Psoas muscle (tissue), 8 donors: ENCODE measurements at regions of chr12 and their contacts with region 1.

Region 1: GRCh38 chr12:14514154-14514842 is 53.4 kb downstream of the PLBD1 start:
- DNase-seq: no peak
- ATAC-seq: peak; percentile 49 to 85 (median 70)
- H3K4me3 ChIP-seq: no peak overlapping the region
- H3K27ac ChIP-seq: no peak overlapping the region
- H3K4me1 ChIP-seq: no peaks in the 10 kb centered on the region
- H3K27me3 ChIP-seq: no peaks in the 10 kb centered on the region
- CTCF ChIP-seq: peak; percentile 42

Region 2: GRCh38 chr12:14618983-14619382 is 104.7 kb after region 1 on chr12:
- intact Hi-C with region 1: loop called in 1 of 2 experiments (anchors 5 kb)
- DNase-seq: no peak
- ATAC-seq: peak in 1 of 4 donors; percentile 60
- H3K4me3 ChIP-seq: no peak overlapping the region
- H3K27ac ChIP-seq: no peak overlapping the region
- H3K4me1 ChIP-seq: peaks cover 3% of the 10 kb centered on the region
- H3K27me3 ChIP-seq: no peaks in the 10 kb centered on the region
- CTCF ChIP-seq: peak; percentile 33

Region 3: GRCh38 chr12:14664510-14664909 is 150.2 kb after region 1 on chr12:
- intact Hi-C with region 1: loop called in 1 of 2 experiments (anchors 5 kb)
- DNase-seq: no peak
- ATAC-seq: peak in 3 of 4 donors; percentile 57 to 76 (median 58)
- H3K4me3 ChIP-seq: no peak overlapping the region
- H3K27ac ChIP-seq: no peak overlapping the region
- H3K4me1 ChIP-seq: no peaks in the 10 kb centered on the region
- H3K27me3 ChIP-seq: no peaks in the 10 kb centered on the region
- CTCF ChIP-seq: peak; percentile 71

Region 4: DNA sequence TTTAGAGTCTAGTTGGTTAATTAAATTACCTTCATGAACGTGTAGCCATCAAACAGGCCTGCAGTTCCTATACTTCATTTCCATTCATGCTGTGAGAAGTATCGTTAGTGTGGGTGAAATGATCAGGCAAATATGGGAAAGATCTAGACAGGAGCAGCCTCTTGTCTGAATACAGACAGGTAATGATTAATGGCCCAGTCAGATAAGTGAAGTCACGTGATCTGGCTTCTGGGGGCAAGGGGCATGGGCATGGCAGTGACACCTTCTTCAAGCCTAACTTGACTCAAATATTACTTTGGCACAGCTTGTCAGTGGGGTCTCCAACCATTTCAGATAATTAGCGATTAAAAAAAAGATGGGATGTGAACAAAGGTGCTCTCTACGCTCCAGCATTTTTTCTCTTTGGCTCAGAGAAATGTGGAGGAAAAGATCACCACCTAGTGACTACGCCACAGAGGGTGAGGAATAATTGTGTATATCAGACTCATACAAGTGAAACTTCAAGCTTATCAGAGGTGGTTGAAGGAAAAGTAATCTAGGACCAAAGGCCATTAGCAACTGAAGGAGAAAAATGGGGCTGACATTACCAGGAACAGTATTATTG is 164.4 kb after region 1 on chr12:
- intact Hi-C with region 1: no loop called
- DNase-seq: no peak
- ATAC-seq: no peak
- H3K4me3 ChIP-seq: no peak overlapping the region
- H3K27ac ChIP-seq: no peak overlapping the region
- H3K4me1 ChIP-seq: no peaks in the 10 kb centered on the region
- H3K27me3 ChIP-seq: no peaks in the 10 kb centered on the region
- CTCF ChIP-seq: no peak